ENCODE measurements at regions of chr18 and their contacts with region 1.

Region 1: DNA sequence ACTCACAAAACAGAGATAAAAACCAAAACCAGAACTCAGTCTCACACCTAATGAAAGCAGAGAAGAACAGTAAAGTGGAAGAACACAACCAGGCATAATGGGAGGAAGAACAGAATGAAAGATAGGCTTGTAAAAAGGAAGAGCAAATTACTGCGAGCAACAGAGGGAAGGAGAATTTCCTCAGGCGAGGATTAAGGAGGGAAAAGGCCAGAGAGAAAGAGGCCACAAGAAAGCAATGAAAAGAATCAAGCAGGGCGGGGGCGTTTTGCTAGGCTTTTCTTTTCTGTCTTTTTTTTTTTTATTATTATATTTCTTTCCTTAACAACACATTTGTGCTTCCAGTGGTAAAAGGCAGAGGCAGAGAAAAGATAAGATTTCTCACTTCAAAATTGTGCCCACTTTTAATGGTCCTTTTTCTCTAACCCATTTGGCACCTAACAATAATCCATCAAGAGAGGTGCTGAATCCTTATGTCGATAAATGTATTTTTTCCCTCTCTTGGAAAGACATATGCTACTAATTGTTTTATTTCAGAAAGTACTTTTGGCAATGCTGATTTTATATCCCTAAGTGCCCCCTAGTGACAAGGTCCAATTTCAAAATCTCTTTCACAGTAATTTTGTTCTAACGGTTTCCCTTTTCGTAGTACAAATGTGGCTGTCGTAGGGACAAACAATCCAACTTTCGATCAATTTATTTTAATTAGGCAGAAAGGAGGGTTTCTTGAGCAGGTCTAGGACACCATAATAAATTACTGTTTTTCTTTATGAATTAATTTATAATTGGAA is 138.7 kb upstream of the AQP4 start:
- DNase-seq: peak in 1 of 10 donors; percentile 20

Region 2: GRCh38 chr18:26307189-26307773 is 697.0 kb before region 1 on chr18:
- intact Hi-C with region 1: loop called (anchors 5 kb)
- DNase-seq: peak in 1 of 10 donors; percentile 16

Region 3: GRCh38 chr18:26813043-26813442 is 191.2 kb before region 1 on chr18:
- intact Hi-C with region 1: loop called (anchors 5 kb)
- DNase-seq: peak in 4 of 10 donors; percentile 18 to 80 (median 42)

Measured in posterior cingulate gyrus (tissue), 11 donors.